ENCODE measurements at regions of chr13 and their contacts with region 1.

Region 1: DNA sequence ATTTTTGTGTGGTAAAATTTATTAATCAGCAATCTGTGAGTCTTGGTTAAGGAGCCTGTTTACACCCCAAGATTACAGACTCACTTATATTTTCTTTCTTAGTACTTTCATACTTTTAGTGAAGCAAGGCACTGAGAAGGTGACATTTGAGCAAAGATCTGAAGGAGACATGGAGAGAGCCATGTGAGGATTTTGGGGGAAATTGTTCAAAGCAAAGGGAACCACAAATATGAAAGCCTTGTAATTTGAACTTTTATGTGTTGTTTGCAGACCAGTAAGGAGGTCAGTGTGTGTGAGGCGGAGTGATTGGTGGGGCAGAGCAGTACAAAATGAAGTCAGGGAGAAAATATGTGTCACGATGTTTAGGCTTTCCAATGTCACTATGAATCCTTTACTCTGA is 140.7 kb upstream of the KLF12 start:
- DNase-seq: no peak
- H3K4me3 ChIP-seq: no peak overlapping the region
- H3K27ac ChIP-seq: no peak overlapping the region
- H3K4me1 ChIP-seq: no peaks in the 10 kb centered on the region
- H3K27me3 ChIP-seq: no peaks in the 10 kb centered on the region
- CTCF ChIP-seq: no peak
- EP300 ChIP-seq: no peak
- POLR2A ChIP-seq: no peak

Region 2: DNA sequence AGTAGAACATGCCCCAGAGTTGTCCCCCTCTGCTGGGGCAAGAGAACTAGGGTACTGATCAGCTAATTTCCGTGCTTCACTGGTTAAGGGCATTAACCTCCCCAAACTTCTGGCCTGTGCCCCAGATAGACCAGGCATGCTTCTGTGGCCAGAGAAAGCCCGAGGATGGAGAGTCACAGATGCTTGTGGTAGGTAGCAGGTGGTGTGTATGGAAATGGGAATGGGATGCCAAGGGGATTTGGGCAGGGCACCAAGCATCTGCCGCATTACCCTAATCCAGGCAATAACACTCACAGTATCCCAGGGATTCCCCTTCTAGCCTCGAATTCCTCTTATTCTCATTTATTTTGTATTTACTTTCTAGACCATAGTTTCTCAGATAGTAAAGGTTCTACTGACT is 16.0 kb before region 1 on chr13:
- intact Hi-C with region 1: loop called in 1 of 4 experiments (anchors 2 kb)
- DNase-seq: no peak
- H3K4me3 ChIP-seq: no peak overlapping the region
- H3K27ac ChIP-seq: no peak overlapping the region
- H3K4me1 ChIP-seq: no peaks in the 10 kb centered on the region
- H3K27me3 ChIP-seq: no peaks in the 10 kb centered on the region
- CTCF ChIP-seq: no peak
- EP300 ChIP-seq: no peak
- POLR2A ChIP-seq: no peak

Region 3: GRCh38 chr13:74450964-74451363 is 176.0 kb after region 1 on chr13:
- intact Hi-C with region 1: no loop called
- DNase-seq: no peak
- H3K4me3 ChIP-seq: no peak overlapping the region
- H3K27ac ChIP-seq: no peak overlapping the region
- H3K4me1 ChIP-seq: peaks cover 4% of the 10 kb centered on the region
- H3K27me3 ChIP-seq: no peaks in the 10 kb centered on the region
- CTCF ChIP-seq: no peak
- EP300 ChIP-seq: no peak
- POLR2A ChIP-seq: no peak